ENCODE measurements at regions of chr1 and their contacts with region 1.

Region 1: DNA sequence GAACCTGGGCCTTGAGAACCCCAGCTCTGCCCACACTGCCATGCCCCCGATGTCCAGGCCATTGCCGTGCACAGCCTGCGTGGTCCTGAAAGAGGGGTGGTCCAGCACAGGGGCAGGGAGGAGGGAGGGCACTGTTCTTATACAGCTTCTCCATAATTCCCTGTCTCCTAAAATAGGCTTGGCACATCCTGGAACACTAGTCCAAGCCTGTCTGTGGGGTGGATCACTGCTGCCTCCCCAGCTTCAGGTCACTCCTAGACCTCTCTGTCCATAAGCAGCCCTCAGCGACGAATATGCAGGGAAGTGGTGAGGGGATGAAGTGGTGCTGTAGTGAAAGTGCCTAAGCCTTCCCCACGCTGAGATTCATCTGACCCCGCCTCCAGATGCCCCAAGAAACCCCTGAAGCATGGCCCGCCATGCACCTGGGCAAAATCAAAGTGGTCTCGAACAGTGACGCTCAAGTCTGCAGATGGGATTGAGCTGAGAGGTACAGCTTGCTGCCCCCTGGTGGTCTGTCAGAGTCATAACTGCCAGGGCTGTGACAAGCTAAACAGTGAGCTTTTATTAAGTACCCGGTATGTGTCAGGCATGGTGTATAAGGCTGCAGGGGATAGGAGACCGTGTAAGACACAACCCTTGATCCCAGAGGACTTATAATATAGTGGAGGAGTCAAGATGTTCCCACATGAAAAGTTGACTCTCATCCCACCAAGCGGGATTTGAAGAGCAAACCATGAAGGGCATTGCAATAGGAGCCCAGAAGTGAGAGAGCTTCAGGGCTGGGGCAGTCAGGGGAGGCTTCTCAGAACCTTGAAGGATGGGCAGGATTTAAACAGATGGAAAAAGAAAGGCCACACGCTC is 66.6 kb downstream of the FAM163A start:
- DNase-seq: peak; percentile 79
- ATAC-seq: peak; percentile 65
- H3K4me3 Mint-ChIP-seq: no peak overlapping the region
- H3K27ac Mint-ChIP-seq: no peak overlapping the region
- H3K4me1 Mint-ChIP-seq: peaks cover 6% of the 10 kb centered on the region
- H3K27me3 Mint-ChIP-seq: peaks cover 4% of the 10 kb centered on the region

Region 2: DNA sequence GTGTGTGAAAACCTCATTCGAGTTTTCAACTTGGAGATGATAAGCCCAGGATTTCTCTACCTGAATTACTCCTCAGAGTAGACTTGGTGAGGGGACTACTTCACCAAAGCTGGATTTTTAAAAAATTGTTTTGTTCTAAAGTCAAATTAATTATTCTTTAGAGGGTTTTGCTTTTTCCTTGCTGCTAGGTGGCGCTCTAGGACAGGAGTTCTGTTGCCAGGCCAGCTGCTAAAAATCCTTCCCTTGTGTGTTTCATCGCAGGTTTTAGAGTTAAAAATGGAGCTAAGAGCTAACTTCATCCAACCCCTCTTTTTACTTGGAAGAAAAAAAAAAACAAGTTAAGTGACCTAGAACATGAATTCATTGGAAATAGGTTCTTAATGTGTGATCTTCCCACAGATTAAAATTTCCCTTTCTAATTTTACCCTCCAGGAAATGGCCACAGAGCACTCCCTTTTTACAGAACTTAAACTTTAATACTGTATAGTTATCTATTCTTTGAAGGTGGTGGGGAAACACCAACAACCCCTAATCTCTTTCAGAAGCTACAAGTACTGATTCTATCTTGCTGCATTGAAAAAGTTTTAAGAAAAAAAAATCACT is 103.3 kb before region 1 on chr1:
- CTCF ChIA-PET with region 1: interaction called, 655 read pairs
- POLR2A ChIA-PET with region 1: interaction called, 7 read pairs
- DNase-seq: peak; percentile 71
- ATAC-seq: no peak
- H3K4me3 Mint-ChIP-seq: no peak overlapping the region
- H3K27ac Mint-ChIP-seq: no peak overlapping the region
- H3K4me1 Mint-ChIP-seq: peaks cover 6% of the 10 kb centered on the region
- H3K27me3 Mint-ChIP-seq: peaks cover 4% of the 10 kb centered on the region

Region 3: GRCh38 chr1:179761296-179761695 is 48.4 kb before region 1 on chr1:
- CTCF ChIA-PET with region 1: interaction called, 11 read pairs
- POLR2A ChIA-PET with region 1: no interaction called
- DNase-seq: no peak
- ATAC-seq: no peak
- H3K4me3 Mint-ChIP-seq: no peak overlapping the region
- H3K27ac Mint-ChIP-seq: no peak overlapping the region
- H3K4me1 Mint-ChIP-seq: no peaks in the 10 kb centered on the region
- H3K27me3 Mint-ChIP-seq: peaks cover 17% of the 10 kb centered on the region

Region 4: GRCh38 chr1:179824265-179824664 is 14.5 kb after region 1 on chr1:
- CTCF ChIA-PET with region 1: interaction called, 62 read pairs
- POLR2A ChIA-PET with region 1: no interaction called
- DNase-seq: no peak
- ATAC-seq: no peak
- H3K4me3 Mint-ChIP-seq: no peak overlapping the region
- H3K27ac Mint-ChIP-seq: no peak overlapping the region
- H3K4me1 Mint-ChIP-seq: no peaks in the 10 kb centered on the region
- H3K27me3 Mint-ChIP-seq: no peaks in the 10 kb centered on the region

Region 5: DNA sequence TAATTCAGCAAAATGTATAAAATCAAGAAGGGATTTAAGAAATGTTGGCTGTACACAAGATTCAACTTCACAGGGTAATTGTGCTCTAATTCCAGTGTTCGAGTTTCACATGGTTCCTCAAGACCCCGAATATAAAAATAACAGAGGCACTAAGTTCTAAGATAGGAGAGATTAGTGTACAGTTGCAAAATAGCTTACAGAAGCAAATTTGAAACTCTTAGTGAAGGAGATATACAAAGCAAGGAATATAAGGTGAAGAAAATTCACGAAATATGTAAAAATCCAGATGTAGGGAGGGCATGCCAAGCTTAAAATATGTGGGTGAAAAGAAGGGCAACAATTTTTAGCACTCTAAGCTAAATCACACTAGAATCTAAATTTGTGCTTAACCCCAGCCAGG is 38.5 kb after region 1 on chr1:
- CTCF ChIA-PET with region 1: interaction called, 14 read pairs
- POLR2A ChIA-PET with region 1: no interaction called
- DNase-seq: no peak
- ATAC-seq: no peak
- H3K4me3 Mint-ChIP-seq: no peak overlapping the region
- H3K27ac Mint-ChIP-seq: no peak overlapping the region
- H3K4me1 Mint-ChIP-seq: peaks cover 8% of the 10 kb centered on the region
- H3K27me3 Mint-ChIP-seq: no peaks in the 10 kb centered on the region

Region 6: DNA sequence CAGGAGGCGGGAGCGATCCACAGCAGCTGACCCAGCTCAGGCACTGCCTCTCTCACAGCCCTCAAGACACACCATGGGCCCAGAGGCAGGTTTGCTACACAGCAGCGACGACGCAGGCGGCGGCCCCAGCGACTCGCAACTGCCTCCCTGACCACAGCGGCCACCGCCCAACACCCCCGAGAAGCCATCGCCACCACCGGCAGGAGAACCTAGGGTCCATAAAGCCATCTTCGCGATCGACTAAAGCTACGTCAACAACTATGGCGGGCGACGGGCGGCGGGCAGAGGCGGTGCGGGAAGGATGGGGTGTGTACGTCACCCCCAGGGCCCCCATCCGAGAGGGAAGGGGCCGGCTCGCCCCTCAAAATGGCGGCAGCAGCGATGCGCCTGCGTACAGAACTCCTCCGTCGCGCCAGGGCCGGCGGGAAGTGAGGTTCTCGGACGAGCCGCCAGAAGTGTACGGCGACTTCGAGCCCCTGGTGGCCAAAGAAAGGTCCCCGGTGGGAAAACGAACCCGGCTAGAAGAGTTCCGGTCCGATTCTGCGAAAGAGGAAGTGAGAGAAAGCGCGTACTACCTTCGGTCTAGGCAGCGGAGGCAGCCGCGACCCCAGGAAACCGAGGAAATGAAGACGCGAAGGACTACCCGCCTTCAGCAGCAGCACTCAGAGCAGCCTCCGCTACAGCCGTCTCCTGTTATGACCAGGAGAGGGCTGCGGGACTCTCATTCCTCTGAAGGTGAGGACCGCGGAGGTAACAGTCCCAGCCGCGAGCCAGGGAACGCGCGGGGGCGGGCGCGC is 72.7 kb after region 1 on chr1 and contains the start of gene TOR1AIP1:
- CTCF ChIA-PET with region 1: interaction called, 6 read pairs
- POLR2A ChIA-PET with region 1: interaction called, 13 read pairs
- DNase-seq: peak; percentile 98
- ATAC-seq: peak; percentile 83
- H3K4me3 Mint-ChIP-seq: peak within 1 kb of the TSS; percentile 92
- H3K27ac Mint-ChIP-seq: peak within 1 kb of the TSS; percentile 99
- H3K4me1 Mint-ChIP-seq: peaks cover 50% of the 10 kb centered on the region
- H3K27me3 Mint-ChIP-seq: no peaks in the 10 kb centered on the region
- total RNA-seq, gene TOR1AIP1: 67.7 to 71.0 TPM

Region 7: GRCh38 chr1:180065811-180066549 is 256.2 kb after region 1 on chr1:
- CTCF ChIA-PET with region 1: no interaction called
- POLR2A ChIA-PET with region 1: no interaction called
- DNase-seq: no peak
- ATAC-seq: no peak
- H3K4me3 Mint-ChIP-seq: no peak overlapping the region
- H3K27ac Mint-ChIP-seq: no peak overlapping the region
- H3K4me1 Mint-ChIP-seq: no peaks in the 10 kb centered on the region
- H3K27me3 Mint-ChIP-seq: no peaks in the 10 kb centered on the region